ENCODE measurements at regions of chr5 and their contacts with region 1.

Region 1: DNA sequence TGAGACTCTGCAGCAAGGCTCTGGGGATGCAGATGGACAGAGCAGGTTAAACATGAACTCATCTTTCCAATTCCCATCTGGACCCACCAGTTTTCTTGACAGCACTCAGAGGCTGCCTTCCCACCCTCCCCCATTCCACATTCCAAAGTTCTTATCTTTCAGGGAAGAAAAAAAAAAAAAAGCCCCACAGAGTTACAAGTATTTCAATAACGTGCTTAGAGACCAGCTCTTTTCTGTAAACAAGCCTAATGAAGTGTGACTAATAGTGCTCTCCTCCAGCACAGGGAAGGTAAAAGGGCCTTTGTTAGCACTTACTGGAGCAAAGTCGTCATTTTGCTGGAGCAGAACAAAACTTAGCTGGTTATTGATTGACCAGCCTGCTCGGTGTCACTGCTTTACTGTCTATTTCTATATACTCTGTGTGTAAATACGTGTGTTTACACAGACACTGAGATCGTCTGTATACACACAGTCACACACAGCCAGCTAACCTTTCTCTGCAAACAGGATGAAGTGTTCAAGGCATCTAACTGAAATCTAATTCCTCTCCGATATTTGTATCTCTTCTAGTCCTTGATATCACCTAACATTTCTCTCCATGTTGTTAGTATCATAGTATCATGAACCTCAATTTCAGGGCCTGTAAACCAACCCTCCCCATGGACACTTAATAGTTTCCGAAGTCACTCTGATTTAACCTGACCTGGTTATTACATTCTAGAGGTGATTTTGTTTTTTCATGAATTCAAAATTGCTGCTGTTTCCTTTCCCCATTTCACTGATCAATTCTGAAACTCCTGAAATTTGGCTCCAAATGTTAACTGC is 84.9 kb downstream of the ZNF608 start:
- DNase-seq: no peak
- ATAC-seq: no peak
- H3K4me3 ChIP-seq: peak overlapping the region in 1 of 4 donors; percentile 2
- H3K27ac ChIP-seq: peak overlapping the region; percentile 53 to 69 (median 60)
- H3K4me1 ChIP-seq: peaks cover 64 to 78% of the 10 kb centered on the region in 2 donors
- H3K27me3 ChIP-seq: no peaks in the 10 kb centered on the region
- CTCF ChIP-seq: no peak
- POLR2A ChIP-seq: no peak

Region 2: GRCh38 chr5:124735169-124735858 is 73.8 kb after region 1 on chr5:
- in situ Hi-C with region 1: loop called in 3 of 4 experiments (anchors 10 kb)
- intact Hi-C with region 1: no loop called
- DNase-seq: no peak
- ATAC-seq: peak; percentile 82 to 83
- H3K4me3 ChIP-seq: peak overlapping the region; percentile 44 to 57 (median 47)
- H3K27ac ChIP-seq: peak overlapping the region; percentile 55 to 72 (median 62)
- H3K4me1 ChIP-seq: peaks cover 57 to 72% of the 10 kb centered on the region in 2 donors
- H3K27me3 ChIP-seq: no peaks in the 10 kb centered on the region
- CTCF ChIP-seq: no peak
- POLR2A ChIP-seq: no peak

Measured in gastrocnemius medialis (tissue), 4 donors.